ENCODE measurements at regions of chr7 and their contacts with region 1.

Region 1: DNA sequence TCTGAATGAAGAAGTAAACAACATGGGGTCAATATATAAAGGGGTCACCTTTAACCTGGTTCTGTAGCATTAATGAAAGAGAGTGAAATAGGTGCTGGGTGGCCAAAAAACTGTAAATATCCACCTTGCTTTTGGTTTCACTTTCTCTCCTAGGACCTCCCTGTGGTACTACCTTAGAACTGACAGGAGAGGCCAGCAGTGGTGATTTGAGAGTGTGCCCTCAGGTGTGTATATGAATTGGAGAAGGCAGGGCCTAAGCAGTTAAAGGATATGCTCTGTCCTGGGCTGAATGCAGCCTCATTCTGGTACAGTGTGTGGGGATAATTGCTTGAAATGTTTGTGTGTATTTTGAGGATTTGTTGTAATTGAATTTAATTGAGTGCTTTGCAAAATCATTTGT is 62.0 kb downstream of the BBS9 start:
- DNase-seq: peak; percentile 54
- ATAC-seq: peak; percentile 96
- H3K4me3 ChIP-seq: peak overlapping the region; percentile 26 to 57 (median 34); a peak in 5 of 6 replicates
- H3K27ac ChIP-seq: peak overlapping the region; percentile 28
- H3K4me1 ChIP-seq: peaks cover 17% of the 10 kb centered on the region
- H3K27me3 ChIP-seq: no peaks in the 10 kb centered on the region; a peak in 1 of 5 replicates
- CTCF ChIP-seq: peak; percentile 32
- EP300 ChIP-seq: no peak
- POLR2A ChIP-seq: no peak
- RAD21 ChIP-seq: no peak

Region 2: DNA sequence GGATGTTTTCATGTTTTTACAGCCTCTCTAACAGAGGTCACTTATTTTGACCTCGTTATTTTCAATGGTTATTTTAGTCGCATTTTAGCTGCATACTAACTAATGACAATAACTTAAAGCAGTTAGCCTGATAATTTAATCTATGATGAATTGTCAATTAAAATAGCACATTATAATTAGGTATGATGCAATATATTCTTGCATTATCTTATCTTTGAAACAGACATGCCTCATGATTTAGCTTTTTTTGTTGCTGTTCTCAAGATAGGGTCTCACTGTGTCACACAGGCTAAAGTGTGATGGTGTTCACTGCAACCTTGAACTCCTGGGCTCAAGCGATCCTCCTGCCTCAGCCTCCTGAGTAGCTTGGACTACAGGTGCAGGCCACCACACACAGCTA is 426.2 kb before region 1 on chr7:
- CTCF ChIA-PET with region 1: no interaction called
- POLR2A ChIA-PET with region 1: no interaction called
- in situ Hi-C with region 1: no loop called
- intact Hi-C with region 1: no loop called
- DNase-seq: no peak
- ATAC-seq: no peak
- H3K4me3 ChIP-seq: no peak overlapping the region
- H3K27ac ChIP-seq: no peak overlapping the region
- H3K4me1 ChIP-seq: no peaks in the 10 kb centered on the region
- H3K27me3 ChIP-seq: no peaks in the 10 kb centered on the region
- CTCF ChIP-seq: no peak
- EP300 ChIP-seq: no peak
- POLR2A ChIP-seq: no peak
- RAD21 ChIP-seq: no peak

Region 3: GRCh38 chr7:33217595-33217994 is 26.3 kb after region 1 on chr7:
- CTCF ChIA-PET with region 1: no interaction called
- POLR2A ChIA-PET with region 1: no interaction called
- in situ Hi-C with region 1: no loop called
- intact Hi-C with region 1: loop called (anchors 2 kb)
- DNase-seq: no peak
- ATAC-seq: no peak
- H3K4me3 ChIP-seq: no peak overlapping the region
- H3K27ac ChIP-seq: no peak overlapping the region
- H3K4me1 ChIP-seq: peaks cover 81% of the 10 kb centered on the region
- H3K27me3 ChIP-seq: no peaks in the 10 kb centered on the region
- CTCF ChIP-seq: no peak
- EP300 ChIP-seq: no peak
- POLR2A ChIP-seq: no peak
- RAD21 ChIP-seq: no peak

Region 4: GRCh38 chr7:33444511-33444910 is 253.2 kb after region 1 on chr7:
- CTCF ChIA-PET with region 1: no interaction called
- POLR2A ChIA-PET with region 1: no interaction called
- in situ Hi-C with region 1: no loop called
- intact Hi-C with region 1: no loop called
- DNase-seq: no peak
- ATAC-seq: no peak
- H3K4me3 ChIP-seq: no peak overlapping the region
- H3K27ac ChIP-seq: no peak overlapping the region
- H3K4me1 ChIP-seq: no peaks in the 10 kb centered on the region
- H3K27me3 ChIP-seq: no peaks in the 10 kb centered on the region
- CTCF ChIP-seq: no peak
- EP300 ChIP-seq: no peak
- POLR2A ChIP-seq: no peak
- RAD21 ChIP-seq: no peak

Region 5: GRCh38 chr7:33495207-33495606 is 303.9 kb after region 1 on chr7:
- CTCF ChIA-PET with region 1: no interaction called
- POLR2A ChIA-PET with region 1: no interaction called
- in situ Hi-C with region 1: no loop called
- intact Hi-C with region 1: no loop called
- DNase-seq: no peak
- ATAC-seq: no peak
- H3K4me3 ChIP-seq: no peak overlapping the region
- H3K27ac ChIP-seq: no peak overlapping the region
- H3K4me1 ChIP-seq: no peaks in the 10 kb centered on the region
- H3K27me3 ChIP-seq: no peaks in the 10 kb centered on the region
- CTCF ChIP-seq: no peak
- EP300 ChIP-seq: no peak
- POLR2A ChIP-seq: no peak
- RAD21 ChIP-seq: no peak